OCI-LY7 (cell line): ENCODE measurements at regions of chr17 and their contacts with region 1.

Region 1: GRCh38 chr17:19992803-19993713 is 15.4 kb upstream of the AKAP10 start:
- DNase-seq: peak; percentile 92
- H3K4me3 ChIP-seq: peak overlapping the region; percentile 34
- H3K27ac ChIP-seq: no peak overlapping the region
- H3K4me1 ChIP-seq: peaks cover 5% of the 10 kb centered on the region
- CTCF ChIP-seq: peak; percentile 80

Region 2: DNA sequence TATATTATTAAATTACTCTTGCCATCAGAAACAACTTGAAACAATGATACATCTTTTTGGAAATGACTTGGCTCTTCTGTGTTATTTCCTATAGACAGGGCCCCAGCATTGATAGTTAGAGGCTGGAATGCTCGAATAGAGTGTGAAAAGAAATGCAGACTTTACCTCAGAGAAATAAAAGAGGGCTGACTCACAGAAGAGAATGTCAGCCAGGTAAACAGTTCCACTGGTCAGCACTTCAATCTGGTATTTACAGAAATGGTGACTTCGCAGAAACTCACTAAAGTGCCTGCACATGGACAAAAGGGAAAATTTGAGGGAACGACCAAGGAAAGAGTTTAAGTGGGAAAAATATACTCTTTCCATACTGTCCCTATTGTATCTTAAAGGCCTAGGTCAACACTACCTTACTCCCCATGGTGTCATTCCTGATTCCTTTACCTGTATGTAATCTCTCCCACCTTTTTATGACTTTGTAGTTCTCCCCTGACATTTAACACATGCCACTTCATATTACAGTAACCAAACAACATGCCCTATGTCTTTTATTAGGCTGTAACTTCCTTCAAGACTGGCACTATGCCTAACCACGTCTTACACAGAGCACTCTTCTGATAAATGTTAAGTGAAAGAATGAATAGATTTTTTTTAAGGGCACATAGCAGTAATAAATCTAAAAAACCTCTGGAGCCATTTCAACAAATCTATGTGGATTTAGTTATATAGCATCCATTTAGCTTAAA is 52.2 kb before region 1 on chr17:
- CTCF ChIA-PET with region 1: no interaction called
- POLR2A ChIA-PET with region 1: no interaction called
- intact Hi-C with region 1: no loop called
- DNase-seq: no peak
- H3K4me3 ChIP-seq: no peak overlapping the region
- H3K27ac ChIP-seq: no peak overlapping the region
- H3K4me1 ChIP-seq: no peaks in the 10 kb centered on the region
- CTCF ChIP-seq: no peak

Region 3: GRCh38 chr17:19958023-19958422 is 35.0 kb before region 1 on chr17:
- CTCF ChIA-PET with region 1: no interaction called
- POLR2A ChIA-PET with region 1: no interaction called
- intact Hi-C with region 1: no loop called
- DNase-seq: no peak
- H3K4me3 ChIP-seq: no peak overlapping the region
- H3K27ac ChIP-seq: no peak overlapping the region
- H3K4me1 ChIP-seq: no peaks in the 10 kb centered on the region
- CTCF ChIP-seq: no peak

Region 4: GRCh38 chr17:20009302-20010098 is 16.4 kb after region 1 on chr17 and contains the start of gene SPECC1:
- CTCF ChIA-PET with region 1: no interaction called
- POLR2A ChIA-PET with region 1: interaction called, 3 read pairs
- intact Hi-C with region 1: loop called (anchors 1 kb)
- DNase-seq: peak; percentile 75
- H3K4me3 ChIP-seq: peak within 1 kb of the TSS; percentile 69
- H3K27ac ChIP-seq: no peak within 1 kb of the TSS
- H3K4me1 ChIP-seq: peaks cover 4% of the 10 kb centered on the region
- CTCF ChIP-seq: peak; percentile 87
- total RNA-seq, gene SPECC1: 0.47 and 0.64 TPM in 2 replicates

Region 5: GRCh38 chr17:20073055-20073979 is 80.3 kb after region 1 on chr17:
- CTCF ChIA-PET with region 1: no interaction called
- POLR2A ChIA-PET with region 1: no interaction called
- intact Hi-C with region 1: no loop called
- DNase-seq: no peak
- H3K4me3 ChIP-seq: no peak overlapping the region
- H3K27ac ChIP-seq: no peak overlapping the region
- H3K4me1 ChIP-seq: no peaks in the 10 kb centered on the region
- CTCF ChIP-seq: no peak

Region 6: GRCh38 chr17:20121359-20122253 is 128.5 kb after region 1 on chr17:
- CTCF ChIA-PET with region 1: no interaction called
- POLR2A ChIA-PET with region 1: interaction called, 9 read pairs
- intact Hi-C with region 1: loop called (anchors 1 kb)
- DNase-seq: peak; percentile 60
- H3K4me3 ChIP-seq: no peak overlapping the region
- H3K27ac ChIP-seq: no peak overlapping the region
- H3K4me1 ChIP-seq: no peaks in the 10 kb centered on the region
- CTCF ChIP-seq: peak; percentile 94